ENCODE measurements at regions of chr19 and their contacts with region 1.

Region 1: GRCh38 chr19:44051654-44052402 is at the start of gene ZNF223:
- DNase-seq: peak; percentile 98
- H3K4me3 ChIP-seq: peak within 1 kb of the TSS; percentile 69
- H3K4me3 Mint-ChIP-seq: peak within 1 kb of the TSS; percentile 74
- H3K27ac Mint-ChIP-seq: peak within 1 kb of the TSS; percentile 85
- H3K4me1 ChIP-seq: peaks cover 7% of the 10 kb centered on the region
- H3K4me1 Mint-ChIP-seq: peaks cover 30% of the 10 kb centered on the region
- H3K27me3 ChIP-seq: no peaks in the 10 kb centered on the region
- H3K27me3 Mint-ChIP-seq: no peaks in the 10 kb centered on the region
- CTCF ChIP-seq: no peak
- total RNA-seq, gene ZNF223: 9.9 and 11.3 TPM in 2 replicates

Region 2: GRCh38 chr19:44025217-44025936 is 26.5 kb before region 1 on chr19 and contains the start of gene ZNF222:
- CTCF ChIA-PET with region 1: no interaction called
- POLR2A ChIA-PET with region 1: no interaction called
- intact Hi-C with region 1: loop called (anchors 1 kb)
- DNase-seq: peak; percentile 75 to 83
- H3K4me3 ChIP-seq: peak within 1 kb of the TSS; percentile 84
- H3K4me3 Mint-ChIP-seq: peak within 1 kb of the TSS; percentile 99
- H3K27ac Mint-ChIP-seq: peak within 1 kb of the TSS; percentile 96
- H3K4me1 ChIP-seq: peaks cover 14% of the 10 kb centered on the region
- H3K4me1 Mint-ChIP-seq: peaks cover 12% of the 10 kb centered on the region
- H3K27me3 ChIP-seq: no peaks in the 10 kb centered on the region
- H3K27me3 Mint-ChIP-seq: peaks cover 5% of the 10 kb centered on the region
- CTCF ChIP-seq: no peak
- total RNA-seq, gene ZNF222: 4.4 and 5.6 TPM in 2 replicates

Region 3: DNA sequence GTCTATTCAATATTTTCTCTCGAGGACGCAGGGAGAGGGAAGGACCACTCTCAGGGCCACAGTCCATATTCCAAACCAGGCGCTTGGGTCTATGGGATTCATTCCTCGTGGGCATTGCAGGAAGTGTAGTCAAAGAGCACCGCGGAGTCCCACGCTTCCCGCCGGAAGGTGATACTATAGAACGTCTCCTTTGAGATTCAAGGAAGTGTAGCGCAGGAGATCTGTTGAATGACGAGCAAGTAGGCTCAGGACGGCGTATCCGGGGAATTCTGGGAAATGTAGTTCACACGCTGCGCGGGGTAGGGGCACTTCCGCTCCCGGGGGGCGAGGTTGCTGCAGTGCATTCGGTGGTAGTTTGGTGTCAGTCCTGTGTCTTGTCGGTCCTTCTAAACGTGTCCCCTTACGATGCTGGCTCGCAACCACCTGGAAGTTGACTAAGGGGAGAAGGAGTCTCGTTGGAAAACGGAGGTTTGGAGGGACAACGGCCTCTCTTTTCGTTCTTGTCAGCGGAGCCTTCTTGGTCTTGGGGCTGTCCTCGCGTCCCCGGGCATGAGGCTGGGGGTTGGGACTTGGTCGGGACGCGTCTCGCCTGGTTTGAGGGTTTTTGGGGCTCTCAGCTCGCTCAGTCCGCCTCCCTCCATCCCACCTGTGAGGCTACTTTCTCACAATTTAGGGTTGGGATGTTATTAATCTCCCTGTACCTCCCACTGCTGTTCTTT is 20.2 kb after region 1 on chr19 and contains the start of gene ZNF284:
- CTCF ChIA-PET with region 1: no interaction called
- POLR2A ChIA-PET with region 1: no interaction called
- intact Hi-C with region 1: loop called (anchors 1 kb)
- DNase-seq: peak; percentile 91 to 94
- H3K4me3 ChIP-seq: peak within 1 kb of the TSS; percentile 77
- H3K4me3 Mint-ChIP-seq: peak within 1 kb of the TSS; percentile 83
- H3K27ac Mint-ChIP-seq: peak within 1 kb of the TSS; percentile 85
- H3K4me1 ChIP-seq: peaks cover 3% of the 10 kb centered on the region; the same call in 1 of the 2 replicates
- H3K4me1 Mint-ChIP-seq: peaks cover 14% of the 10 kb centered on the region
- H3K27me3 ChIP-seq: no peaks in the 10 kb centered on the region
- H3K27me3 Mint-ChIP-seq: no peaks in the 10 kb centered on the region
- CTCF ChIP-seq: no peak
- total RNA-seq, gene ZNF284: 2.3 and 3.6 TPM in 2 replicates

Measured in Caco-2 (cell line).